Natural killer cell (primary cell): ENCODE measurements at regions of chr14 and their contacts with region 1.

Region 1: GRCh38 chr14:73568381-73568781 is 632 bp upstream of the ACOT2 start:
- DNase-seq: peak in 1 of 2 donors; percentile 45
- ATAC-seq: no peak
- H3K4me3 ChIP-seq: peak overlapping the region; percentile 66
- H3K4me3 Mint-ChIP-seq: peak overlapping the region; percentile 93
- H3K27ac ChIP-seq: peak overlapping the region; percentile 92
- H3K27ac Mint-ChIP-seq: peak overlapping the region; percentile 92 to 94
- H3K4me1 ChIP-seq: peaks cover 45% of the 10 kb centered on the region
- H3K4me1 Mint-ChIP-seq: peaks cover 29 to 46% of the 10 kb centered on the region in 2 donors
- H3K27me3 ChIP-seq: no peaks in the 10 kb centered on the region
- H3K27me3 Mint-ChIP-seq: no peaks in the 10 kb centered on the region
- CTCF ChIP-seq: no peak

Region 2: GRCh38 chr14:73491256-73492042 is 76.9 kb before region 1 on chr14:
- intact Hi-C with region 1: loop called (anchors 2 kb)
- DNase-seq: peak; percentile 76 to 84
- ATAC-seq: peak; percentile 76 to 81 (median 81)
- H3K4me3 ChIP-seq: peak overlapping the region; percentile 38
- H3K4me3 Mint-ChIP-seq: peak overlapping the region; percentile 92
- H3K27ac ChIP-seq: peak overlapping the region; percentile 84
- H3K27ac Mint-ChIP-seq: peak overlapping the region; percentile 86 to 88
- H3K4me1 ChIP-seq: peaks cover 24% of the 10 kb centered on the region
- H3K4me1 Mint-ChIP-seq: peaks cover 36 to 39% of the 10 kb centered on the region in 2 donors
- H3K27me3 ChIP-seq: no peaks in the 10 kb centered on the region
- H3K27me3 Mint-ChIP-seq: no peaks in the 10 kb centered on the region
- CTCF ChIP-seq: no peak

Region 3: GRCh38 chr14:73503648-73504047 is 64.7 kb before region 1 on chr14:
- intact Hi-C with region 1: loop called (anchors 1 kb)
- DNase-seq: peak in 1 of 2 donors; percentile 38
- ATAC-seq: peak in 1 of 3 donors; percentile 35
- H3K4me3 ChIP-seq: no peak overlapping the region
- H3K4me3 Mint-ChIP-seq: no peak overlapping the region
- H3K27ac ChIP-seq: no peak overlapping the region
- H3K27ac Mint-ChIP-seq: no peak overlapping the region
- H3K4me1 ChIP-seq: no peaks in the 10 kb centered on the region
- H3K4me1 Mint-ChIP-seq: peaks cover 4 to 5% of the 10 kb centered on the region in 2 donors
- H3K27me3 ChIP-seq: no peaks in the 10 kb centered on the region
- H3K27me3 Mint-ChIP-seq: no peaks in the 10 kb centered on the region
- CTCF ChIP-seq: no peak